Transverse colon (tissue), 4 donors: ENCODE measurements at regions of chr10 and their contacts with region 1.

Region 1: GRCh38 chr10:110803830-110804338 is 67.8 kb upstream of the PDCD4 start:
- DNase-seq: peak; percentile 74
- H3K4me3 ChIP-seq: no peak overlapping the region
- H3K27ac ChIP-seq: peak overlapping the region; percentile 63 to 75 (median 65)
- H3K4me1 ChIP-seq: peaks cover 18 to 51% (median 30%) of the 10 kb centered on the region in 4 donors
- H3K27me3 ChIP-seq: no peaks in the 10 kb centered on the region
- CTCF ChIP-seq: peak; percentile 59 to 82 (median 64)
- EP300 ChIP-seq: no peak
- POLR2A ChIP-seq: no peak

Region 2: DNA sequence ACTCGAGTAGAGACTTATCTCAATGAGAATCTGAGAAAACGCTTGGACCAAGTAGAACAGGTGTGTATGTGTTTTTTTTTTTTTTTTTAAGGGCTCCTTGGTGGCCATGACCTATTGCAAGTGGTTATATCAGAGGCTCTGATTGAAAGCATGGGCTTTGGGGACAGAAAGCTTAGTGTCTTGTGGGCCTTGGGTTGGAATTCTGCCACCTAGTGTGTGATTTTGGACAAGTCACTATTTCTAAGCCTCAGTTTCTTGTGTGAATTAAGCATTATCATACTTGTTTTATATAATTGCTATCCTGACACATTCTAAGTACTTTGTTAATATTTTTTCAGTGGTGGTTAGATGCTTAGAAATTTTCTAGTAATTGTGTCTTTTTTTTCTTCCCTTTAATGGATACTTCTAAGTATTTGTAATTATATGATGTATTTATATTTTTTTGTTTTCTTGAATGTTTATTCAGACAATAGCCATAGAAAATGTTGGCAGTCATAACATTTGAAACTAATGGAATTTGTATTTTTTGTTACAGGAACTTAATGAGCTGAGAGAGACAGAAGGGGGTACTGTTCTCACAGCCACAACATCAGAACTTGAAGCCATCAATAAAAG is 203.3 kb before region 1 on chr10:
- in situ Hi-C with region 1: no loop called
- intact Hi-C with region 1: no loop called
- DNase-seq: no peak
- H3K4me3 ChIP-seq: no peak overlapping the region
- H3K27ac ChIP-seq: no peak overlapping the region
- H3K4me1 ChIP-seq: no peaks in the 10 kb centered on the region
- H3K27me3 ChIP-seq: no peaks in the 10 kb centered on the region
- CTCF ChIP-seq: peak; percentile 32 to 46 (median 43)
- EP300 ChIP-seq: no peak
- POLR2A ChIP-seq: no peak

Region 3: GRCh38 chr10:110883924-110884323 is 80.0 kb after region 1 on chr10:
- in situ Hi-C with region 1: loop called in 2 of 4 experiments (anchors 10 to 25 kb)
- intact Hi-C with region 1: no loop called
- DNase-seq: no peak
- H3K4me3 ChIP-seq: no peak overlapping the region
- H3K27ac ChIP-seq: peak overlapping the region in 3 of 4 donors; percentile 4 to 45 (median 9)
- H3K4me1 ChIP-seq: peaks cover 4 to 69% (median 31%) of the 10 kb centered on the region in 4 donors
- H3K27me3 ChIP-seq: no peaks in the 10 kb centered on the region
- CTCF ChIP-seq: no peak
- EP300 ChIP-seq: no peak
- POLR2A ChIP-seq: no peak